ENCODE measurements at regions of chr16 and their contacts with region 1.

Region 1: GRCh38 chr16:15888072-15888976 is at the start of gene CEP20:
- DNase-seq: peak; percentile 91
- H3K4me3 ChIP-seq: peak within 1 kb of the TSS; percentile 94
- CTCF ChIP-seq: peak; percentile 2

Region 2: GRCh38 chr16:15835136-15835878 is 53.0 kb before region 1 on chr16:
- CTCF ChIA-PET with region 1: no interaction called
- POLR2A ChIA-PET with region 1: no interaction called
- DNase-seq: no peak
- H3K4me3 ChIP-seq: no peak overlapping the region
- CTCF ChIP-seq: no peak

Region 3: GRCh38 chr16:15847611-15848175 is 40.6 kb before region 1 on chr16:
- CTCF ChIA-PET with region 1: no interaction called
- POLR2A ChIA-PET with region 1: no interaction called
- DNase-seq: no peak
- H3K4me3 ChIP-seq: no peak overlapping the region
- CTCF ChIP-seq: no peak

Region 4: DNA sequence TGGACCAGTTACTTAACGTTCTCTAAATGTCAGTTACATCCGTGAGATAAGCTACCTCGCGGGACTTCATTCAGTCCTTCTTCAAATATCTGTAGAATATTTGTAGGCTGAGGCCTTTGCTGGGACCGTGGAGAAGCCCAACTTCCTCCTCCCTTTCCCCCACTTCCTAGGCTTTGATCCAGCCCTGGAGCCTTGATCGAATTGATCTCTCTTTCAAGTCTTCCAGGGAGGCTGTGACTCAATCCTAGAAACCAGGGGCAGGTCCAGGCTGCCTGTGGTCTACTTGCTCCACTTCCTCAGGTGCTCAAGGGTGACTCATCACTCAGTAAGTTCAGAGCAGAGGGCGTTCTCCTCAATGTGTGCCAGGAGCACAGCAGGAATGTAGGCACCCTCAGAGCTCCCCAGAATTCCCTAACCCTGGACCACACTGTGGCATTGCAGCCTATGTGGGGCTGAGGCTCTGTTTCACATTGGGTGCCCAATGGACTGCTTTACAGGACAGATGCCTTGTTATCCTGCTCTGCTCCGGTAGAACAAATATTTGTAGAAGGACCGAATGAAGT is 11.3 kb after region 1 on chr16:
- CTCF ChIA-PET with region 1: interaction called, 24 read pairs
- POLR2A ChIA-PET with region 1: interaction called, 7 read pairs
- DNase-seq: no peak
- H3K4me3 ChIP-seq: no peak overlapping the region
- CTCF ChIP-seq: no peak

Region 5: GRCh38 chr16:16127469-16128116 is 239.3 kb after region 1 on chr16:
- CTCF ChIA-PET with region 1: interaction called, 13 read pairs
- POLR2A ChIA-PET with region 1: no interaction called
- DNase-seq: peak; percentile 7
- H3K4me3 ChIP-seq: no peak overlapping the region
- CTCF ChIP-seq: peak; percentile 72

Measured in AG04449 (cell line).